Left cardiac atrium (tissue), 4 donors: ENCODE measurements at regions of chr10 and their contacts with region 1.

Region 1: GRCh38 chr10:119281581-119282071 is 74.3 kb downstream of the GRK5 start:
- DNase-seq: peak; percentile 88
- ATAC-seq: peak; percentile 71 to 75

Region 2: GRCh38 chr10:119341459-119342301 is 60.1 kb after region 1 on chr10:
- intact Hi-C with region 1: loop called in 1 of 2 experiments (anchors 5 kb)
- DNase-seq: peak; percentile 77
- ATAC-seq: peak; percentile 84 to 88

Region 3: GRCh38 chr10:119355930-119356329 is 74.3 kb after region 1 on chr10:
- intact Hi-C with region 1: no loop called
- DNase-seq: no peak
- ATAC-seq: no peak

Region 4: GRCh38 chr10:119650692-119651513 is 369.3 kb after region 1 on chr10 and contains the start of gene BAG3:
- intact Hi-C with region 1: no loop called
- DNase-seq: peak; percentile 98
- ATAC-seq: peak; percentile 92 to 93
- total RNA-seq, gene BAG3: 113 to 114 TPM